Gastrocnemius medialis (tissue), 4 donors: ENCODE measurements at regions of chr15 and their contacts with region 1.

Region 1: GRCh38 chr15:31365655-31366127 is 39.1 kb downstream of the KLF13 start:
- DNase-seq: peak; percentile 96 to 98
- ATAC-seq: peak; percentile 69 to 83
- H3K4me3 ChIP-seq: peak overlapping the region; percentile 46 to 62 (median 54)
- H3K27ac ChIP-seq: peak overlapping the region; percentile 95 to 100 (median 97)
- H3K4me1 ChIP-seq: peaks cover 94 to 96% of the 10 kb centered on the region in 2 donors
- H3K27me3 ChIP-seq: no peaks in the 10 kb centered on the region
- CTCF ChIP-seq: peak in 3 of 5 experiments; percentile 13 to 30 (median 17)
- POLR2A ChIP-seq: peak in 1 of 2 donors; percentile 36

Region 2: DNA sequence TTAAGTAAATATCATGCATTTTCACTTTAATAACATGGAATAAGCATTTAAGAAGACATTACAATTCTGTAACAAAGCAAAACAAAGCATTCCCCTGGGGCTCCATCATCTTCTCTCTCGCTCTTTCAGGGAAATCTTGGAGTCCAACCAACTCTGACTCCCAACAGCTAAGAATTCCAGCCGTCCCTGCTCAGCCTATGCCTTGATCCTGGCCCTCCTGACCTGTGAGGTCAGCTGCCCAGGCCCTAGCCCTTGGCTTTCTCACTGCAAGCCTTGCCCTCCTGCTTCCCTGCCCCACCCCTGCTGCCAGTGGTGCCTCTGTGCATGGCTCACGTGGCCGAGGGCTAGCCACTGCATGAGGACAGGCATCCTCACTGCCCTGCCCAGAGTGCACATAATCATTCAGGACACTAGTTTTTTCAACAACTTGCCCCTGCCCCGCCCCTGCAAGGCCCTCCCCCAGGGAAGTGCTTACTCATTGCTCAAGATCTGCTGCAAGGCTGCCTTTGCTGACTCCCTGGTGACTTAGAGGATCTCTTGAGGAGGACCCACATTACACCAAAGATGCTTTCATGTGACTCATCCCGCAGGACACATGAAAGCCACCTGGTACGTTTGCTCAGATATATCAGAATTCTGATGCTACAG is 411.8 kb before region 1 on chr15:
- in situ Hi-C with region 1: loop called in 1 of 4 experiments (anchors 25 kb)
- intact Hi-C with region 1: no loop called
- DNase-seq: peak; percentile 30 to 80
- ATAC-seq: peak; percentile 66 to 73
- H3K4me3 ChIP-seq: no peak overlapping the region
- H3K27ac ChIP-seq: peak overlapping the region; percentile 83 to 95 (median 84)
- H3K4me1 ChIP-seq: peaks cover 14 to 38% of the 10 kb centered on the region in 2 donors
- H3K27me3 ChIP-seq: no peaks in the 10 kb centered on the region
- CTCF ChIP-seq: no peak
- POLR2A ChIP-seq: peak in 1 of 2 donors; percentile 24

Region 3: GRCh38 chr15:31326156-31326732 is 39.4 kb before region 1 on chr15:
- in situ Hi-C with region 1: no loop called
- intact Hi-C with region 1: loop called (anchors 1 kb)
- DNase-seq: peak; percentile 97 to 99
- ATAC-seq: peak; percentile 67 to 70
- H3K4me3 ChIP-seq: peak overlapping the region; percentile 72 to 97 (median 88)
- H3K27ac ChIP-seq: peak overlapping the region; percentile 93 to 99 (median 98)
- H3K4me1 ChIP-seq: peaks cover 29 to 34% of the 10 kb centered on the region in 2 donors
- H3K27me3 ChIP-seq: no peaks in the 10 kb centered on the region
- CTCF ChIP-seq: peak in 3 of 5 experiments; percentile 3 to 33 (median 21)
- POLR2A ChIP-seq: peak; percentile 97 to 99

Region 4: DNA sequence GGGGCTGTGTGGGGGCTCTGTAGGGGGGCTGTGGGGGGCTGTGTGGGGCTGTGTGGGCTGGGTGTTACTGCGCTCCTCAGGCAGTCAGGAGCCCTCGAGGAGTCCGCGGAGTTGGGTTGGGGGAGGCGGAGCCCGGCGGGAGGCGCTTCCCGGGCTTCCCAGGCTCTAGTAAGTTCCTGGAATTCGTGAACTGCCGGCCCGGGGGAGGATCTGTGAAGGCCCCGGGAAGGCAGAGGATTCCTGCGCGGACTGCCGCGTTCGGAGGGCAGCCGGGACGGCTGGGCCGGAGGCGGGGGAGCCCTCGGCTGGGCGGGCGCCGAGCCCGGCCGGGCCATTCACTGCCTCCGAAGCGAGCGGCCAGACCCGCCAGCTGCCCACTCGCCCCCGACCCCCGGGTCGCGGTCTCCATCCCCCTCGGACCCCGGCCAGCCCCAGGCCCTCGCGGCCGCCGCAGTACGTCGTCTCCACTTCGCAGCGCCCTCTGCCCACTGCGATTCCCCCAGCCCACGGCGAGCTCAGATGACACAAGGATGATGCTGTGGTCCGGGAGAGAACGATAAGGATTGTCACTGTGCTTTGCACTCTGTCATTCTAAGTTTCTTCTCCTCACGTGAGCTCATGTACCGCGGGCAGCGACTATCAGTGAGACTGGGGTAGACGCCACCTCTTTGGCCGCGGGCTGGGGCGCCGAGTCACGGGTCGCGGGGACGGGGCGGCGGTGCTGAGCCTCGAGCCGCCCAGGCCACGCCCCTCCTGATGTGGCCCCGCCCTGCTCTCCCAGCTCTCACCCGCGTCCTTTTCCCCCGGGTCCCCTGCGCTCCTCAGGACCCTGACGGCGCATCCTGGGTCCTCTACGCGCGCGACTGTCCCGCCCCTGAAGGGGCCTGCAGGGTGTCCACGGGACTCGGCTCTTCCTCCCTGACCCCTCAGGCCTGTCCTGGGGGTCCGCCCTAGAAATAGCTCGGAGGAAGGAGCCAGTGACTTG is 26.3 kb after region 1 on chr15:
- in situ Hi-C with region 1: no loop called
- intact Hi-C with region 1: loop called (anchors 1 kb)
- DNase-seq: peak; percentile 76 to 87
- ATAC-seq: peak; percentile 50 to 59
- H3K4me3 ChIP-seq: peak overlapping the region; percentile 61 to 84 (median 73)
- H3K27ac ChIP-seq: peak overlapping the region; percentile 85 to 96 (median 91)
- H3K4me1 ChIP-seq: peaks cover 30 to 51% of the 10 kb centered on the region in 2 donors
- H3K27me3 ChIP-seq: no peaks in the 10 kb centered on the region
- CTCF ChIP-seq: peak in 1 of 5 experiments; percentile 16
- POLR2A ChIP-seq: peak; percentile 94 to 96

Region 5: DNA sequence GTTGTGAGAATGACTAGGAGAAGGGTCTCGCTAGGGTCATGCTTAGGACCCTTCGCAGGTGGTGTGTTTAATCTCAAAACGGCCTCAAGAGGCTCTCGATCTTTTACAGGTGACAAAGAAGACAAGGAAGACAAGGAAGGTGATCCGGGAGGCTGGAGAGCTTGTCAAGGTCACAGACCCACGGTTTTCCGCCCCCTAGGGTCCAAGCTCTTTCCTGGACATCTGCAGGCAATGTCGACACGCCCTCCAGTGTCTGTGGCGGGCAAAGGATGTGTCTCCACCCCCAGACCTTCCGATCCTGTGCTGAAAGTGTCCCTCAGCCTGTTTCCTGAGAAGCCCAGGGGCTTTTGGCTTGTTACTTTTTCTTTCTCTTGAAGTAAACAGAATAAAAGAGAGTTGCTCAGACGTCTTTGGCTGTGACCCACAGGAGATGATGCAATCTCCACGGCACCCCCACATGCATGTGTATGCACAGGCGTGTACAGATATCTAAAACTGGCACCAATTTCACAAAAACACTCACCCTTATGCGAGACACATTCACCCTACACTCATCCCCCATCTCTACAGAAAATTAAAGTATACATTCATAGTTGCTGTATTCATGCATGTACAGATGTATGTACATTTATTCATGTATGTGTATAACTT is 69.7 kb after region 1 on chr15:
- in situ Hi-C with region 1: loop called in 1 of 4 experiments (anchors 10 kb)
- intact Hi-C with region 1: loop called (anchors 1 kb)
- DNase-seq: peak; percentile 59 to 81
- ATAC-seq: peak; percentile 77 to 90
- H3K4me3 ChIP-seq: peak overlapping the region in 3 of 4 donors; percentile 3 to 23 (median 7)
- H3K27ac ChIP-seq: peak overlapping the region; percentile 58 to 69 (median 64)
- H3K4me1 ChIP-seq: peaks cover 13 to 14% of the 10 kb centered on the region in 2 donors
- H3K27me3 ChIP-seq: no peaks in the 10 kb centered on the region
- CTCF ChIP-seq: peak; percentile 60 to 80 (median 68)
- POLR2A ChIP-seq: no peak

Region 6: DNA sequence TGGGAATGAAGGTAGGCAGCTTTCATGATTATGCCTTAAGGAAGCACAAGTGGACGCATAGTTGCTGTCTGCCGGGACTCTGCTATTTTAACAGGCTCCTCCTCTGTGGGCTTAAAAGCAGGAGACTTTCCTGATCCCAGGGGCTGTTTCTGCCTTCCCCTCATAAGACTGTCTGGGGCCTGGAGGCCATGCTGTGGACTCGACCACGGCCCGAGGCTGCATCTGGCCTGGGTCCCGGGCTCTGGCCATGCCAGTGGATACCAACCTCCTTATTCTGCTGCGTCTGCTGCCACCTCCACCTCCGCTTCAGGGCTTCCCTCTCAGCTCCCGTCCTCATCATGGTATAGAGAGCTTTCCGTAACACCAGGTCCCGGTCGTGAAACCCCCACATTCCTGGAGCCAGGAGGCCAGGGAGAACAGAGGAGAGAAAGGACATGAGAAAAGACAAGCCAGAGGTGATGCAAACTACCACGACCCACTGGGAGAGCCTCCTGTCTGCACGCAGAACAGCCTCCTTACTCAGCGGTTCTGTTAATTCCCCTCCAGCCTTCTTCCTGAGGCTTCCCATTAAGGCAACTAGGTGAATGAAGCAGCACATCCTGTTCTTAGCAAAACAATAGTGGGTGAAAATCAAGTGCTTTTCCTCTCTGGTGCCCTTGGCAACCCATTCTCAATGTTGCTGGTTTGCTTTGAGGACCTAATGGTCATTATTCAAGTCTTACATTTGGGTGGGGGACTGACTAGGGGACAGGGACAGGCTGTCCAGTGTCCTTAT is 161.4 kb after region 1 on chr15:
- in situ Hi-C with region 1: no loop called
- intact Hi-C with region 1: no loop called
- DNase-seq: no peak
- ATAC-seq: peak in 1 of 2 donors; percentile 73
- H3K4me3 ChIP-seq: peak overlapping the region in 1 of 4 donors; percentile 32
- H3K27ac ChIP-seq: peak overlapping the region in 1 of 4 donors; percentile 5
- H3K4me1 ChIP-seq: no peaks in the 10 kb centered on the region
- H3K27me3 ChIP-seq: no peaks in the 10 kb centered on the region
- CTCF ChIP-seq: no peak
- POLR2A ChIP-seq: no peak